Sciatic nerve (tissue), 2 donors: ENCODE measurements at regions of chr1 and their contacts with region 1.

Region 1: DNA sequence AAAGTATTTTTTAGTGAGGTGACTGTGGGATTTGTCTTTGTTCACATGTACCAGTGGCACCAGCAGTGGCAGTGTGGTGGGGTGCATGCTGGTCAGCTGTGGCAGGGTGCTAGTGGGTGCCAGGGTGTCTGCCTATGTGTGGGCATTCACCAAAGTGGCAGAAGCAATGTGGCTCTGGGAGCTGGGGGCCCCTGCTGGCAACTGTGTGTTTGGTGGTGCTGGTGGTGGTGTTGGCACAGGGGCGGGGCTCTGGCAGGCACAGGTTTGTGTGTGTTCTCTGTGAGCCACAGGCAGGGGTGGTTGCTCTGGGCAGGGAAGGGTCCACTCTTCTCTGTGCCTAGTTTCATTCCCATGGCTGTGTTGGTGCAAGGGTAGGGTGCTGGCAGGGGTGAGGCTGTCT is 161.5 kb downstream of the CENPF start:
- DNase-seq: no peak
- ATAC-seq: no peak

Region 2: DNA sequence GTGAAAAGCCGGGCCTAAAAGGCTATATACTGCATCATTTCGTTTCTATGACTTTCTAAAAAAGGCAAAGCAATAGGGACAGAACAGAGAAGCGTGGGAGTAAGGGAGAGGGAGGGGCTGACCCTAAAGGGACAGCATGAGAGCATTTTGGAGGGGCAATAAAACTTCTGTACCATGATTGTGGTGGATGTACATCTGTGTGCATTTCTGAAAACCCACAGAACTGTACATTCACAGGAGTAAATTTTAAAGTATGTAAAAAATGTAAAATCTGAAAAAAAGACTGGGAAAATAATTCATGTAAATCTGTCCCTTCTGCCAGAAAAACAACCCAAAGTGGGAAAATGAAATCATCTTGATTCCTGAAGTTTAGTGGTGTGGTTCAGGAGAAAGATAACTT is 73.8 kb after region 1 on chr1:
- intact Hi-C with region 1: no loop called
- DNase-seq: no peak
- ATAC-seq: no peak

Region 3: GRCh38 chr1:216194721-216195120 is 1430.2 kb after region 1 on chr1:
- intact Hi-C with region 1: loop called (anchors 5 kb)
- DNase-seq: no peak
- ATAC-seq: no peak